ENCODE measurements at regions of chr19 and their contacts with region 1.

Region 1: DNA sequence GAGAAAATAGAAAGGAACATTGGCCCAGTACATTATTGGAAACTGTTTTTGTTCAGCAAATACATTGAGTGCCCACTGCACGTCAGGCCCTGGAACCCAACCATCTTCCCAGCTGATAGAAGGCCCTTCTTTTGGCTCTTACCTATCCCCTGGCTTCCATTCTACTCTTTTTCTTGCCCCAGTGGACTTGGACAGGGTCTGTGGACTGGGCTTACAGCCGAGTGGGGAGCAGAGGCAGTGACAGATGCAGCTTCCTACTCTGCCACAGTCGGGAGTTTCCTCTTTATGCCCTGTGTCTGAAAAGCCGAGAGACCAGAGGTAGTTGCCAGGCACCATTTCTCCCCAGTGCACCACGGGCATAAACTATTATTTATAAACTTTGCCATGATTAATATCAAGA is 70.4 kb downstream of the ARHGAP35 start:
- DNase-seq: no peak

Region 2: DNA sequence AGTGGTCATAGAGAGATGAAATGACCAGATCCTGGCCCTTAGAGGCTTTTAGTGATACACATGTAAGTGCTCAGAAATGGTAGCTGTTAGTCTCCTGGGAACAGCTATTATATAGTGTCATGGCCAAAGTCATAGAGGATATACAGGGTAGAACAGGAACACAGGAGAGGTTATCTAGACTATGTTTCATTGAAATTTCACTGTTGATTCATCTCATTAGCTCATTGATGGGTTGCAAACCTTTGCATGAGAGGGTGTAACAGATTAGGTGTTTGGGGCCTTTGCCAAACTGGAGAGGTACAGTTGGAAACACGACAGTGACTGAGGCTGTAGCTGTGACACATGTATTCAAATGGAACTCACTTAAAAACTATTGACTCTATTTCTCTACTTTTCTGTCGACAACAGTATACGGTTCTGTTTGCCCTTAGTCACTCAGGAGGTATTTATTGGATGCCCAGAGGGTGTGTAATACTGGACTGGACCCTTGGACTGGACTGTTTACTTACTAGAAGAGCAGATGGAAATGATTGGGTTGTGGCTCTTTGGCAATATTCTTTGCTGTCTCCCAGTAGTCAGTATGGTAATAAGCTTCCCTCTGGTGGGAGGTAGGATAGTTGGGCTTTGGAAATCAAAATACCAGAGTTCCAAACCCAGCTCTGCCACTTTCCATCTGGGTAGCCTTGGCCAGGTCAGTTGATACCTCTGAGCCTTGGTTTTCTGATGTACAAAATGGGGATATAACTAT is 40.6 kb before region 1 on chr19:
- intact Hi-C with region 1: no loop called
- DNase-seq: no peak

Region 3: GRCh38 chr19:46944918-46945628 is 13.9 kb after region 1 on chr19:
- intact Hi-C with region 1: loop called (anchors 2 kb)
- DNase-seq: peak; percentile 85

Measured in cardiac septum (tissue), 1 donor.